Lower leg skin (tissue), 4 donors: ENCODE measurements at regions of chr2 and their contacts with region 1.

Region 1: GRCh38 chr2:174744111-174744510 is 20.2 kb downstream of the CHRNA1 start:
- DNase-seq: peak in 1 of 2 donors; percentile 40
- H3K4me3 ChIP-seq: no peak overlapping the region
- CTCF ChIP-seq: no peak
- POLR2A ChIP-seq: no peak

Region 2: GRCh38 chr2:172804423-172804822 is 1939.7 kb before region 1 on chr2:
- intact Hi-C with region 1: no loop called
- DNase-seq: no peak
- H3K4me3 ChIP-seq: no peak overlapping the region
- CTCF ChIP-seq: no peak
- POLR2A ChIP-seq: no peak

Region 3: DNA sequence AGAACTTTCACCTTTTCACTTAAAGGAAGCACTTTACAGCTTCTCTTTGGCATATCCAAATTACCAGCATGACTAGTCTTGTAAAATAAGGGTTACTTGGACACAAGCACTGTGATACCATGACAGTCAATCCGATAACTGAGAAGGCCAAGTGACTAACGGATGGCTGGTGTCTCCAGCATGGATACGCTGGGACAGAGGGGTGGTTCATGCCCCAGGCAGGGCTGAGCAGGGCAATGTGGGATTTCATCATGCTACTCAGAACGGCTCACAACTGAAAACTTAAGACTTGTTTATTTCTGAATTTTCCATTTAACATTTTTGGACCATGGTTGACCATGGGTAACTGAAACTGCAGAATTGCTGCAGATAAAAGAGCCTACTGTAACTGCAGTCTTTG is 214.2 kb before region 1 on chr2:
- intact Hi-C with region 1: loop called (anchors 5 kb)
- DNase-seq: no peak
- H3K4me3 ChIP-seq: no peak overlapping the region
- CTCF ChIP-seq: no peak
- POLR2A ChIP-seq: no peak

Region 4: GRCh38 chr2:174561283-174561971 is 182.7 kb before region 1 on chr2:
- intact Hi-C with region 1: no loop called
- DNase-seq: peak in 1 of 2 donors; percentile 45
- H3K4me3 ChIP-seq: no peak overlapping the region
- CTCF ChIP-seq: no peak
- POLR2A ChIP-seq: no peak